BJ (cell line): ENCODE measurements at regions of chr2 and their contacts with region 1.

Region 1: GRCh38 chr2:167212014-167212648 is 323.9 kb downstream of the XIRP2 start:
- DNase-seq: no peak
- H3K4me3 ChIP-seq: no peak overlapping the region
- H3K27me3 ChIP-seq: no peaks in the 10 kb centered on the region
- CTCF ChIP-seq: peak; percentile 74

Region 2: GRCh38 chr2:166944909-166945308 is 267.2 kb before region 1 on chr2:
- CTCF ChIA-PET with region 1: no interaction called
- POLR2A ChIA-PET with region 1: no interaction called
- DNase-seq: no peak
- H3K4me3 ChIP-seq: no peak overlapping the region
- H3K27me3 ChIP-seq: no peaks in the 10 kb centered on the region
- CTCF ChIP-seq: no peak

Region 3: DNA sequence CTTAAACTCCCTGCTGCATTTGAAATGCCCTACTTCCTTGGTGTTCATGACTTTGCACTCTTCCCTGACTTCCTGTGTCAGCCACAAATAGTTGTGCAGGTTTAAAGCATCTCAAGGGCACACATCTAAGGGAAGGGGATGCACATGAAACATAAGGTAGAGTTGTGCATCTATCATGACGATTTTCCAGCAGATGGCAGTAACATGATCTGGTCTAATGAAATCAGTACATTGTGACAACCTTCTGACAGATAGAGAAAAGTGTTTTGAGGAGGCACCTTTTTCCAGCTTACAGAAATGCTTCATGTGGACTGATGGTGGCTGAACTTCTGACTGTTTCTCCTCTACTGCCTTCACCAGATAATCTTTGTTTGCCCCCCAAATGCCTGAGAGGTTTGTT is 85.0 kb before region 1 on chr2:
- CTCF ChIA-PET with region 1: interaction called, 58 read pairs
- POLR2A ChIA-PET with region 1: no interaction called
- DNase-seq: no peak
- H3K4me3 ChIP-seq: no peak overlapping the region
- H3K27me3 ChIP-seq: no peaks in the 10 kb centered on the region
- CTCF ChIP-seq: peak; percentile 35

Region 4: DNA sequence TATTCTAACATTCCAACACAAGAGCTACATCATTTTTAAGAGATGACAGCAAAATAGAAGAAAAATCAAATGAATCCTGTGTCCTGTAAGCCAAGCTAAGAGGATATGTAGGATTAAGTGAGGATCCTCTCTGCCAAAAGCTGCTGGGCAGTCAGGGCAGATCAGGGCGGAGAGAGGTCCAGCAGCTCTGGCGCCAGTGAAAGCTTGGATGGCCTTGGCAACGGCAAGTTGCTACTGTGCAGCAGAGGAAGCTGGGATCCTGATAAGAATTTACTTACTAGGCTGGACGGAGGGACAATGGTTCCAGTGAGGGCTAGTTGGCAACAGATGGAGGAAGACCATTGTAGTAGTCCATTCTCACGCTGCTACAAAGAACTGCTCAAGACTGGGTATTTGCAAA is 67.7 kb after region 1 on chr2:
- CTCF ChIA-PET with region 1: no interaction called
- POLR2A ChIA-PET with region 1: no interaction called
- DNase-seq: no peak
- H3K4me3 ChIP-seq: no peak overlapping the region
- H3K27me3 ChIP-seq: no peaks in the 10 kb centered on the region
- CTCF ChIP-seq: no peak

Region 5: GRCh38 chr2:167480232-167480985 is 268.3 kb after region 1 on chr2:
- CTCF ChIA-PET with region 1: no interaction called
- POLR2A ChIA-PET with region 1: no interaction called
- DNase-seq: no peak
- H3K4me3 ChIP-seq: no peak overlapping the region
- H3K27me3 ChIP-seq: no peaks in the 10 kb centered on the region
- CTCF ChIP-seq: no peak